ENCODE measurements at regions of chr3 and their contacts with region 1.

Region 1: GRCh38 chr3:186570096-186570940 is at the start of gene DNAJB11:
- DNase-seq: peak; percentile 98 to 99 (median 99)
- H3K4me3 ChIP-seq: peak within 1 kb of the TSS; percentile 90
- H3K27ac ChIP-seq: peak within 1 kb of the TSS; percentile 71 to 85
- H3K4me1 ChIP-seq: peaks cover 7% of the 10 kb centered on the region
- H3K27me3 ChIP-seq: no peaks in the 10 kb centered on the region
- CTCF ChIP-seq: no peak
- EP300 ChIP-seq: no peak
- POLR2A ChIP-seq: peak; percentile 78
- total RNA-seq, gene DNAJB11: 17.7 to 33.4 (median 22.3) TPM

Region 2: DNA sequence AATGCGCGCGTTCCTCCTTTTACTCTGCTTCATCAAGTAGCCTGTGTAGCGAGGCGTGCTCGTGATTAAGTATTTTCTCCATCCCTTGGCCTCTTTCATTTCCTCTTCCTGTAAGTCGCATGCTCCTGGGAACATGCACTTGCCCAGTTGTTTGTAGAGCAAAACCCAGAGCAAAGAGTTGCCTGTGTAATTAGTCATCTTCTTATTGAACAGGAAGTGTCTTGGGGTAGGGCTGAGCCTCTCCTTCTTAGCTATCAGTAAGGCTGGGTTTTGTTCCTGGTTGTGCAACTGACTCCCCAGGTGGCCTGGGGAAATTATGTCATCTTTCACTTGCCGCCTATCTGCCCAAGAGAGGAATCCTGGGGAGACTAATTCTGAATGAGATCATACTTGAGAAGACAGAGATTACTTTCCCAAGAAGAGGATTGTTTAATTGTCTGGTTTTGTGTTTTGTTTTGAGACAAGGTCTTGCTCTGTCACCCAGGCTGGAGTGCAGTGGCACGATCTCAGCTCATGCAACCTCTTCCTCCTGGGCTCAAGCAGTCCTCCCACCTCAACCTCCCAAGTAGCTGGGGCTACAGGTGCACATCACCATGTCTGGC is 1032.8 kb before region 1 on chr3:
- intact Hi-C with region 1: no loop called
- DNase-seq: no peak
- H3K4me3 ChIP-seq: no peak overlapping the region
- H3K27ac ChIP-seq: no peak overlapping the region
- H3K4me1 ChIP-seq: no peaks in the 10 kb centered on the region
- H3K27me3 ChIP-seq: no peaks in the 10 kb centered on the region
- CTCF ChIP-seq: no peak
- EP300 ChIP-seq: no peak
- POLR2A ChIP-seq: no peak

Region 3: DNA sequence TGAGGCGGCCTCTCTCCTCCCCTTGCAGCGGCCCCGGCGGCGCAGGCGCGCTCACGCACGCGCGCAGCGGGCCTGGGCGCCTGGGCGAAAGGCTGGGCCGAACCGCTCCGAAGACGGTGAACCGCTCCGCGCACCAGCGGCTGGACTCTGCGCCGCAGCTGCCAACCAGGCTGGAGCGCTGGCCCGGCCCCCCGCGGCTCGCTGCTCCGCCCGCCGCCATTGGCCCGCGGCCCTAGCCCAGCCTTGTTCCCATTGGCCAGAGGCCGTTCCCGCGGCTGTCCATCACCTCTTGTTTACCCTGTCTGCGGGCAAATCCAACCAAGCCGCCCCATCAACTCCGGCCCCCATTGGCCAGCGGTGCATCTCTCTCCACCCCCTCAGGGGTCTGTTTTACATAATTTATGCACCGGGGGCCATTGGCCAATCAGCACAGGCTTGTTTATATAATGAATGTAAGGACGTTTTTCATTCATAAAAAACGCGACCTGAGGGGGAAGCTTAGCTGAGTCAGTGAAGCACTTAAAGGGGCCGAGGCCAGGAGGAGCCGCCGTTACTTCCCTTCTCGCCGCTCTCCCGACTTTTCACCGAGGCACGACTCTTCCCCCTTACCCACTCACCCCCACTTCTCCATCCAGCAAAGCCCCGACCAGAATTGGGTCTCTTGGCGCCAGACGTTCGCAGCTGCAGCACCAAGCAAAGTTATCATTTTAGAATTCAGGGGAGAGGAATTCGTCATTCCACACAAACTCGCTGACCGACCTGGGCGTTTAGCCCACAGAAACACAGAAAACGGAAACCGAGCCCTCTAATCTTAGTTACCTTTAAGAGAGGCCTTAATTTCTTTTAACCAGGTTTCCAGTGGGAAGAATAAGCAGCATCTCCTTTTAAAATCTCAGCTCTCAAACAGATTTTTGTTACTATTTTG is 461.1 kb before region 1 on chr3 and contains the start of gene ETV5:
- intact Hi-C with region 1: loop called in 1 of 4 experiments (anchors 10 kb)
- DNase-seq: peak; percentile 97 to 99 (median 98)
- H3K4me3 ChIP-seq: peak within 1 kb of the TSS; percentile 64
- H3K27ac ChIP-seq: peak within 1 kb of the TSS in 1 of 2 donors; percentile 50
- H3K4me1 ChIP-seq: peaks cover 7% of the 10 kb centered on the region
- H3K27me3 ChIP-seq: no peaks in the 10 kb centered on the region
- CTCF ChIP-seq: no peak
- EP300 ChIP-seq: no peak
- POLR2A ChIP-seq: peak; percentile 50
- total RNA-seq, gene ETV5: 3.3 to 20.4 (median 6.6) TPM

Region 4: GRCh38 chr3:186330772-186331460 is 239.4 kb before region 1 on chr3:
- intact Hi-C with region 1: no loop called
- DNase-seq: no peak
- H3K4me3 ChIP-seq: no peak overlapping the region
- H3K27ac ChIP-seq: no peak overlapping the region
- H3K4me1 ChIP-seq: no peaks in the 10 kb centered on the region
- H3K27me3 ChIP-seq: no peaks in the 10 kb centered on the region
- CTCF ChIP-seq: no peak
- EP300 ChIP-seq: no peak
- POLR2A ChIP-seq: no peak

Region 5: DNA sequence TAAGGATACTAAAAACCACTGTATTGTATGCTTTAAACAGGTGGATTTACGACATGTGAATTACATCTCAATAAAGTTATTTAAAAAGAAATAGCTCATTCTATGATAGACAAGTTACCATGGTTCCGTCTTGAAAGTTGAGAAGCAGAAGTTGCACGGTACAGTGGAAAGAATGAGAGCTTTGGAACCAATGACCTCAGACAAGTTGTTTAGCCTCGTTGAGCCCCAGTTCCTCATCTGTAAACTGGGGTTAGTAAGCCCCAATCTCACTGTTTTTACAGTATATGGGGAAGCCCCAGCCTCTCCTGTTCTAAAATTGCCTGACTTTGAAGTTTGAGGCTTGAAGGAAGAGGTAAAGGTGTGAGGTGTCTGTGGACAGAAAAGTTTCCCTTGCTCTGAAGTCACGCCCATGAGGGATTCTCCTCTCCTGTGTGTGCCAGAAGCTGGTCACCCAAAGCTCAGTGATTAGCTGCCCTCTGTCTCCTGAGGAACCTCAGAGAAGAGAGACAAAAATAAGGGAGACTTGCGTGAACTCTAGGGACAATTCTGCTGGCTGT is 36.1 kb before region 1 on chr3:
- intact Hi-C with region 1: no loop called
- DNase-seq: no peak
- H3K4me3 ChIP-seq: no peak overlapping the region
- H3K27ac ChIP-seq: no peak overlapping the region
- H3K4me1 ChIP-seq: no peaks in the 10 kb centered on the region
- H3K27me3 ChIP-seq: no peaks in the 10 kb centered on the region
- CTCF ChIP-seq: no peak
- EP300 ChIP-seq: no peak
- POLR2A ChIP-seq: no peak

Region 6: GRCh38 chr3:188154014-188154808 is 1583.9 kb after region 1 on chr3 and contains the start of gene LPP:
- intact Hi-C with region 1: no loop called
- DNase-seq: peak; percentile 59 to 84 (median 77)
- H3K4me3 ChIP-seq: peak within 1 kb of the TSS; percentile 70
- H3K27ac ChIP-seq: peak within 1 kb of the TSS; percentile 81 to 91
- H3K4me1 ChIP-seq: peaks cover 10% of the 10 kb centered on the region
- H3K27me3 ChIP-seq: no peaks in the 10 kb centered on the region
- CTCF ChIP-seq: peak in 1 of 3 donors; percentile 5
- EP300 ChIP-seq: no peak
- POLR2A ChIP-seq: no peak
- total RNA-seq, gene LPP: 80.6 to 280 (median 165) TPM